ENCODE measurements at regions of chr14 and their contacts with region 1.

Region 1: GRCh38 chr14:50762001-50762930 is 68.7 kb downstream of the NIN start:
- DNase-seq: no peak
- H3K4me3 ChIP-seq: no peak overlapping the region
- H3K27ac ChIP-seq: no peak overlapping the region
- H3K4me1 ChIP-seq: no peaks in the 10 kb centered on the region
- H3K27me3 ChIP-seq: no peaks in the 10 kb centered on the region
- CTCF ChIP-seq: no peak

Region 2: DNA sequence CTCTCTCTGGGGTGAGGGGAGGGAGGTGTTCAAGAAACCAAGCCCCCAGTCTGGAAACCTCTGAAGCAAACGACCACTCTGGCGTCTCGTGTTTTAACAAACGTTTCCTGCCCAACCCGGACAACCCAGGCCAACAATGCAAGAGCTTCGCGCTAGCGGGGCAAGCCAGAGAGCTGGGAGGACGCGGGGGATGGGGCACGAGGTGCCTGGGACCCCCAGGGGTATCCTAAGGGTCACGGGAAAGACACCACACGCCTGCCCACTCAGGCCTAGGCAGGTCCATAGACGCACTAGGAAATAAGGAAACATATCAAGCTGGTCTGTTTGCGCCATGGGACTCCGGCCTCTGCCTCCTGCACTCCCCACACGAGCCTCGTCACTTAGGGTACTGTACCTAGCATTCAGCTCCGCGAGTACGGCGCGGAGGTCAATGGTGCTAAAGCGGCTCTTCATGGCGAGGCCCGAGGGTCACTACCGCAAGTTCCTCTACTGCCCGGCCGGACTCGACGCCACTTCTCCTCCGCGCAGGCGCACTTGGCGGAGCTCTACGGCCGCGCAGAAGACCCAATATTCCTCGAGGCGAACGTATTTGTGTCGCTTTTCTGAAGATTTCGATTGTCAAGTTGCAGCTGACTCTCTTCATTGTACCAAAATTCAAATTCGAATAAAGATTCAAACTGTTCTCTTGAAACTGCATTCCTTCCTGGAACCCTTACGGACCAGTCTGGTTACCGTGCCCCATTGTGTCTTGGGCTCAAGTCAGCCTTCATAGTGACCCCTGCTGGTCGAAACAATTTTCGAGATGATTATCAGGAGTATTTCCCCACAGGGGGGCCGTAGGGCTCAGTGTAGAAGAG is 909.7 kb before region 1 on chr14 and contains the start of gene NEMF:
- CTCF ChIA-PET with region 1: no interaction called
- POLR2A ChIA-PET with region 1: no interaction called
- intact Hi-C with region 1: no loop called
- DNase-seq: peak; percentile 95
- H3K4me3 ChIP-seq: peak within 1 kb of the TSS; percentile 86
- H3K27ac ChIP-seq: peak within 1 kb of the TSS; percentile 87
- H3K4me1 ChIP-seq: peaks cover 10% of the 10 kb centered on the region
- H3K27me3 ChIP-seq: no peaks in the 10 kb centered on the region
- CTCF ChIP-seq: peak; percentile 92
- total RNA-seq, gene NEMF: 77.5 and 80.2 TPM in 2 replicates

Region 3: DNA sequence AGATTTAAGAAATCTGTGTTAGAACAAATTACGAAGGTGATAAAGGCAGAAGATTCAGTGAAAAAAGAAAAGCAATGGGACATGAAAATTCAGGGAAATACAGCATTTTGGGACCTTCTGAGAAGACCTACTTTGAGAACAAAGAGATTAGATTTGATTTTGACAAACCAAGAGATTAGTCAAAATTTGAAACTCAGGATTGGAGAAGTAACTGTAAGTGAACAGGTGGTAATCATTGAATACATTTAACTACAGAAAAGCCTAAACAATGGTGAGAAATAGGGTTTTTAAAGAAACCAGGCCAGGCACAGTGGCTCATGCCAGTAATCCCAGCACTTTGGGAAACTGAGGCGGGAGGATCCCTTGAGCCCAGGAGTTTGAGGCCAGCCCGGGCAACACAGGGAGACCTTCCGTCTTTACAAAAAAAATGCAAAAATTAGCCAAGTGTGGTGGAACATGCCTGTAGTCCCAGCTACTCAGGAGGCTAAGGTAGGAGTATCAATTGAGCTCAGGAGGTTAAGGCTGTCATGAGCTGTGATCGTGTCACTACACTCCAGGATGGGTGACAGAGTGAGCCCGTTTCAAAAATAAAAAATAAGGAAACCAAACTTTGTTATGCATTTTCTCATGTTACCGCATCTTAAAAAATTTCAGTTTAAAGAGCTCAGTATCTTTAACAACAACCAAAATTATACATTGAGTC is 85.3 kb before region 1 on chr14:
- CTCF ChIA-PET with region 1: interaction called, 19 read pairs
- POLR2A ChIA-PET with region 1: no interaction called
- intact Hi-C with region 1: no loop called
- DNase-seq: no peak
- H3K4me3 ChIP-seq: no peak overlapping the region
- H3K27ac ChIP-seq: no peak overlapping the region
- H3K4me1 ChIP-seq: no peaks in the 10 kb centered on the region
- H3K27me3 ChIP-seq: no peaks in the 10 kb centered on the region
- CTCF ChIP-seq: no peak

Region 4: GRCh38 chr14:50794068-50794645 is 31.9 kb after region 1 on chr14:
- CTCF ChIA-PET with region 1: no interaction called
- POLR2A ChIA-PET with region 1: interaction called, 13 read pairs
- intact Hi-C with region 1: no loop called
- DNase-seq: no peak
- H3K4me3 ChIP-seq: no peak overlapping the region
- H3K27ac ChIP-seq: no peak overlapping the region
- H3K4me1 ChIP-seq: peaks cover 3% of the 10 kb centered on the region
- H3K27me3 ChIP-seq: no peaks in the 10 kb centered on the region
- CTCF ChIP-seq: no peak